ACHN (cell line): ENCODE measurements at regions of chr2 and their contacts with region 1.

Region 1: DNA sequence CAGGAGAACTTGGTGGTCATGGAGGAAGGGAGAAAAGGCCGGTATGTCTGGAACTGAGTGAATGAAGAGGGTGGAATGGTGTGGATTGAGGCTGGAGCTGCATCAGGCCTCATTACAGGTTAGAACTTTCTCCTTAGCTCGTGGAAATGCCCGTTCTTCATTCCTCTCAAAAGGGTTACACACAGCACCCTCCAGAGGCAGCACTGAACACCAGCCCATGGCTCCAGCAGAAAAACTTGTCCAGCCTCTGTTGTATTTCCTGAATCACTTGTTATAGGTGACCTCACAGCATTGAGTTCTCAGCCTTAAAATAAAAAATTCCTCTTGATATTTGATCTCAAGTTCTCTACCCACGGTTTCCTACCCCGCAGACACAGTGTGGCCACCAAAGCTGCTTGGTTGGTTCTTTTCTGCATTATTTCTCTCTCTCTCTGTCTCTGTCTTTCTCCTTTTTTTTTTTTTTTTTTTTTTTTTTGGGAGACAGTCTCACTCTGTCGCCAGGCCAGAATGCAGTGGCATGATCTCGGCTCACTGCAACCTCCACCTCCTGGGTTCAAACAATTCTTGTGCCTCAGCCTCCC is 89.6 kb downstream of the ITGB1BP1 start:
- DNase-seq: peak; percentile 88

Region 2: GRCh38 chr2:9174771-9175437 is 158.8 kb before region 1 on chr2:
- in situ Hi-C with region 1: loop called (anchors 25 kb)
- DNase-seq: peak; percentile 44

Region 3: DNA sequence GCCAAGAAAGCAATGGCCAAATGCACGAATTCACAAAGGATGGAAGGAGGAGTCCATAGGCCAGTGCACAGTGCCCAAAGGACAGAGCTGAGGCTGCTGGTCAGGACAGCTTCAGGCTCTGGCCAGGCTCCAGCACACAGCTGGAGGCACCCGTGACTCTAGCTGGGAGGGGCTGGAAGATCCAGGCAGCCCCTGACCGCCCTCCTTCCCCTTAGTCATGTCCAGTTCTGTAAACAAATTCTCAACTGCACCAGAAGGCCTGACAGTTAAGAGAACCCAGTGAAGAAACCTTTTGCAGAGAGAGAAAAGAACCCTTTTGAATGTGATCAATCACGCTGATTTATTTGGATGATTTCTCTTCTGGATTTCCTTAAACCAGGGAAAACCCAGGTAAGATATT is 304.9 kb after region 1 on chr2:
- in situ Hi-C with region 1: no loop called
- DNase-seq: peak; percentile 88